ENCODE measurements at regions of chr19 and their contacts with region 1.

Region 1: GRCh38 chr19:29873024-29873800 is 61.4 kb downstream of the CCNE1 start:
- ATAC-seq: peak; percentile 86 to 96 (median 92)
- H3K4me3 ChIP-seq: peak overlapping the region; percentile 25 to 66 (median 35)
- H3K27ac ChIP-seq: no peak overlapping the region
- H3K4me1 ChIP-seq: peaks cover 2 to 9% of the 10 kb centered on the region in 2 donors

Region 2: GRCh38 chr19:29745253-29745652 is 128.0 kb before region 1 on chr19:
- in situ Hi-C with region 1: loop called in 6 of 9 experiments (anchors 25 kb)
- ATAC-seq: peak in 1 of 8 experiments; percentile 52
- H3K4me3 ChIP-seq: no peak overlapping the region
- H3K27ac ChIP-seq: no peak overlapping the region
- H3K4me1 ChIP-seq: no peaks in the 10 kb centered on the region

Region 3: GRCh38 chr19:29771708-29772414 is 101.4 kb before region 1 on chr19:
- in situ Hi-C with region 1: loop called in 4 of 9 experiments (anchors 25 kb)
- ATAC-seq: peak; percentile 34 to 98 (median 60)
- H3K4me3 ChIP-seq: no peak overlapping the region
- H3K27ac ChIP-seq: no peak overlapping the region
- H3K4me1 ChIP-seq: peaks cover 10 to 16% of the 10 kb centered on the region in 2 donors

Region 4: DNA sequence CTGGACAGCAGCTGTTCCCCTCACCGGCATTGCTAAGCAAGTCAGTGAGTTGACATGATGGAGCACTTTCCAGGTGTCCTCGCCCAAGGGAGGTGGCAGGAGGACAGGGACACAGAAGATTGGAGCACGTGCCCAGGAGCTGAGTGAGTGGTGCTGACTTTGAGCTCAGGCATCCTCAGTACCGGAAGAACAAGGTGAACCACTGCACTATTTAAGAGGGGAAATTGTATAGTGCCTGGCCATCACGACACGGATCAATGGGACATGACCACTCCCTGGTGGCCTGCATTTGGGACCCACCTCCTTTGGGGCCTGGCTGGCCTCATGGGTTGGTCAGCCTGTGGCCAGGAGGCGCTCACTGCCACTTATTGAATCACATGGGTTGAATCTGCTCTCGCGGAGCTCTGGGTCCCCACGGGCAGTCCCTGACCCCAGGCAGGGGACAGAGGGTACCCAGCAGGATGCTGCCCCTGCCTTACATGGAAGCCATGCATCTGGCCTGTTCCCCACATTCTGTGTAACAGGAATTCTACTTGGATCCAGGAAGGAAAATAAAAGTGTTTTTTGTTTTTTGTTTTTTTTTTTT is 292.1 kb after region 1 on chr19:
- in situ Hi-C with region 1: no loop called
- ATAC-seq: no peak
- H3K4me3 ChIP-seq: no peak overlapping the region
- H3K27ac ChIP-seq: no peak overlapping the region
- H3K4me1 ChIP-seq: peaks cover 0 to 5% of the 10 kb centered on the region in 2 donors